ENCODE measurements at regions of chr2 and their contacts with region 1.

Region 1: GRCh38 chr2:231557571-231558237 is 27.5 kb upstream of the NMUR1 start:
- DNase-seq: peak; percentile 83
- ATAC-seq: peak; percentile 92

Region 2: DNA sequence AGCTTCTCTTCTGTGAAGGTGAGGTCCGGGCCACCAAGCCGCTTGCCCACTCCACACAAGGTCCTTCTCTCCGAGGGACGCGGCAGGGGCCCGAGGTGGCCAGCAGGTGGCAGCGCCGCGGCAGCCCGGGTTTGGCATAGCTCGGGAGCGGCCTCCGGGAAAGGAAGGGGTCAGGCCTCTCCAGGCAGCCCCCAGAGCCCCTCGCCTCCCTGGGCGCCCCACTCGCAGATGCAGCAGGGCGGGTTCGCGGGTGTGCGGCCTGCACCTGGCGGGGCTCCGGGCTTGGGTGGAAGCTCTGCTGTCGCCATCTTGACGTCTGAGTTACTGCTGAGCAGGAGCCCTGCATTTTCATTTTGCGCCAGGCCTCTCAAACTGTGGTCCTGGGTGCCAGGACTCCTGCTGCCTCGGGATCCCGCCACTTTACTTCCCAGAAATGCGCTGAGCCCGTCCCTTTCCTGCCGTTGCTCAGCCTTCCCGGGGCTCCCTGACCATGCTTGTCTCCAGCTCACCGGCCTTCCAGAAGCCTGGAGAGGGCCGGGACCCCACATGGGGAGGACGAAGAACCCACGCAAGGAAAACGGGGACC is 74.8 kb before region 1 on chr2:
- intact Hi-C with region 1: loop called (anchors 5 kb)
- DNase-seq: peak; percentile 88
- ATAC-seq: peak; percentile 97

Region 3: DNA sequence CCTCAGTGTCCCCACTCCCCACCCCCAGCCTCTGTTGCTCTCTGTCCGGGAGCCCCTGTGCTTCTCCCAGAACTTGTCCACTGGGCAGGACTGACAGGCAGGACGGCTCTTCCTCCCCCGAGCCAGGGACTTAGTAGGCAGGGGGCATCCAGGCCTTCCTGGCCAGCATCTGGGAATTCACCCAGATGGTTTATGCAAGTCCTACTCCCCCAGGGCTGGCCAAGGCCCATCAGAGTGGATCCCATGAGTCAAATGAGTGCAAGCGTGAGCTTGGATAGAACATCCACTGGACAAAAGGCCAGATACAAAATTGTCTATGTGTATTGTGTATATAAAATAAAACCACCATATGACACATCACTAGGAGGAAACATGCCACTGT is 34.9 kb before region 1 on chr2:
- intact Hi-C with region 1: loop called (anchors 5 kb)
- DNase-seq: no peak
- ATAC-seq: no peak

Region 4: DNA sequence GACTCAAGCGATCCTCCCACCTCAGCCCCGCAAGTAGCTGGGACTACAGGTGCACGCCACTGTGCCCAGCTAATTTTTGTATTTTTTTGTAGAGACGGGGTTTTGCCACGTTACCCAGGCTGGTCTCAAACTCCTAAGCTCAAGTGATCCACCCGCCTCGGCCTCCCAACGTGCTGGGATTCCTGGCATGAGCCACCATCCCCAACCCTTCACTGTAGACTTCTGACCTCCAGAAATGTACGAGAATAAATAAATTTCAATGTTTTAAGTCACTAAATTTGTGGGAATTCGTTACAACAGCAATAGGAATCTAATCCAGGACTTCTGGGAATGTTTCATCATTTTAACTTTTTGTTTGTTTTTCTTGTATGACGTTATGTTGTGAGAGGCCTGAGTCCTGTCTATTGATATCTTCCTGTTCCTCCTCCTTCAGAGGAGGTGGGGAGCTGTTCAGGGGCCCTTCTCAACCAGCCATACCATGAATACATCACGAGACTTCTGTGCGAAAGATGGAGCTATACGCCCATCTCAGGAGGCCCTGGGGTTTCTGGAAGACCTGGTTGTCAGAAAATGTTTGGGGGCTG is 74.9 kb after region 1 on chr2:
- intact Hi-C with region 1: no loop called
- DNase-seq: no peak
- ATAC-seq: no peak

Measured in Right ventricle myocardium superior (tissue), 1 donor.